Posterior cingulate gyrus (tissue), 11 donors: ENCODE measurements at regions of chr15 and their contacts with region 1.

Region 1: DNA sequence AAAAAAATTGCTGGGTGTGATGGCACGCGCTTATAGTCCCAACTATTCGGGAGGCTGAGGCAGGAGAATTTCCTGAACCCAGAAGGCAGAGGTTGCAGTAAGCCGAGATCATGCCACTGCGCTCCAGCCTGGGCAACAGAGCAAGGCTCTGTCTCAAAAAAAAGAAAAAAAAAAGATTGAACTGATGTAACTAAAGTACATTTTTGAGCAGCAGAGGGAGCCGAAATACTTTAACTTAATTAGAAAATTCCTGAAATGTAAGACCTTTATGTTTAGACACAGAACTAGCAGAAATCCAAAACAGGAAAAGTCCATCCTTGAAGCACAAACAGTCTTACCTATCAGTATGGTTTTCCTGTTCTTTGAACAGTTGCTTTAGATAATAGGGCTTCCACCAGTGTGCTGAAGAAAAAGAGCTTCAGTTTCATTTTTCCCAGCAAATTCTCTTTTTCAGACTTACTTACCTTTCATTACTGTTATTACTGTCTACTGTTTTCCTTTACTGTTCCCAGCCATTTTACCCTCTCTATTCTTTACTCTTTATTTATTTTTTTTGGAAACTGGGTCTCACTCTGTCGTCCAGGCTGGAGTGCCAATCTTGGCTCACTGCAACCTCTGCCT is 33.4 kb upstream of the ZNF609 start:
- DNase-seq: peak in 1 of 10 donors; percentile 58

Region 2: DNA sequence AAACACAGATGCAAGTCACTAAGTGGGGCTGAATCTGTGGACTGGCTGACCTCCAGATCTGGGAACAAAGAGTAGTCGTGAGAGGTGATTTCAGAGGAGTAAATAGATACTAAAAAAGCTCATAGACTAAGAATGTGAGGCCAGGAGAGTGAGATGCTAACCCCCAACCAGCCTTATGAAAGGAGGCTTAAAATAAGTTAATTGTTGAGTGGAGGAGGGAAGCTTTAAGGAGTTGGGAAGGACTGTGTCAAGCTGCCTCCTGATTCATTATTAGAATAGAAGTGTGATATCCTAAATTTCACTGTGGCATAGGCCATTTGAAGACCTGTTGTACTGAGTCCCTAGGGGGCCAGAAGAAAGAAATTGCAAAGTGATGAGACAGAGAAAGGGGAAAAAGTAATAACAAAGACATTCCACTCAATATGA is 240.8 kb after region 1 on chr15:
- intact Hi-C with region 1: no loop called
- DNase-seq: no peak

Region 3: GRCh38 chr15:64681424-64682024 is 254.6 kb after region 1 on chr15:
- intact Hi-C with region 1: loop called (anchors 2 kb)
- DNase-seq: peak in 4 of 10 donors; percentile 25 to 49 (median 44)

Region 4: DNA sequence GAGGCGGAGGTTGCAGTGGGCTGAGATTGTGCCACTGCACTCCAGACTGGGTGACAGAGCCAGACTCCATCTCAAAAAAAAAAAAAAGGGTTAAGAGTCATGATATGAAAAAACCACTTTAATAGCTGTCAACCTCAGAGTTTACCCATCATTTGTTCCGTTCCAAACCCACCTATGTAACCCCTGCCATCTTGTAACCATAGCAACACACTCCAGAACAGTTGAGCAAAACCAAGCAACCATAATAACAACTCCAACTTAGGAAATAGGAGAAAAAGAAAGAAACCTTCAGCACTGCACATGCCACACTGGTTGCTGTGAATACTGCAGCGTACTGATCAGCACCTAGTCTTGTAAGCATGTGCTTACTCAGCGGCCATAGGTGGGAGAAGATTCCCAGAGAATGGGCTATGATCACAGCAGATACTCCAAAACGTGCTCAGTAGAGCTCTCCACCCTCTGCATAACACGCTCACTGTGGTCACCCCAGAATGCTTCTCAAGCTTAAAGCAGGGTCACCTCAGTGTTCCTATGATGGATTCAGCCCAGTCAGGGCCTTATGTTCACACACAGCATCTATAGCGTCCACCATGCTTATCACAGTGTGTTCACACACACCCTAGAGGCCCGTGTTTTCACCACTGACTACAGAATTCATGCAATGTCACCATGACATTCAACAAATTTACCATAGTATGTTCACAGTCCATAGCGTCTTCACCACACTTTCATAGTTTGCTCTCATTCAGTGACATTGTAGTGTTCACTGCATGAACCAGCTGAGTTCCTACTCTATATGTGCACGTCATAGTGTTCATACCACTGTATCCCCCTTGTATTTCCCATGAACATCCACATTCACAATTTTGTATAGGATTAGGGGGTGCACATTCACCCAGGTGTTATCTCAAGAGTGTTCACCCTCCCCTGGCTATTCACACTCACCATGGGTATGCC is 790.8 kb after region 1 on chr15:
- intact Hi-C with region 1: no loop called
- DNase-seq: no peak